ENCODE measurements at regions of chr17 and their contacts with region 1.

Region 1: DNA sequence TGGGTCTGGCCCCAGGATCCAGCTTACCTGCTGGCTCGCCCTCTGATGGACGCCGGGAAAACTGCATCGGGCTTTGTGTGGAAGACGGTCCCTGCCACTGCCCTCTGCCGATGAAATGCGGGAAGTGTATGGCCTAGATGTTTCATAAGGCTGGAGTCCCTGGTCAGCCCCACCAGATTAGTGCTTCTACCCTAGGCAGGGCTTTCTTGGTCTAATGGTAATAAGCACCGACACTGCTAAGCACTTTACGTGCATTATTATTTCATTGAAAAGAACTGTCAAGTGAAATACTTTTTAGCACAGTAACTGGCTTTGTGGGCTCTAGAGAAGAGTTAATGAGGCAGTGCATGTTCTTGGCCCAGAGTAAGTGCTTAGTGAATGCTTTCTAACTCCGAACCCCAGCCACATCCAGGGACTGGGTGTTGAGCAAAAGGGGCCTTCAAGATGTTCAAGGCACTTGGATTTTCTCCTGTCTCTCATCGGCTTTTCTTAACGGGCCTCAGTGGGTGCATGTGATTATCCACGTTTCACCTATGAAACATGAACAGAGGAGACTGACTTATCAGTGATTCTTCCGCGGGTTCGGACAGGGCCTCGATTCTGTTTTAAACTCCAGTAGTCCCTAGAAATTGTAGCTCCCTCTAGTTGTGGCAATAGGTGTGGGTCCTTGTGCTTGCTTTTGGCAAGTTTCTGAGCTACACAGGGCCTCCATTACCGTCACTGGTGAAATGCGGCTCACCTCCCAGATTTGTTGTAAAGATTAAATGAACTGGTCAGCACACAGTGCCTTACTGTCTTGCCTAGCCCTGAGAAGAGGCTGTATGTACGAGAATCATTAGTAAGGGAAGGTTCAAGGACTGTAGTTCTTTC is 6.6 kb downstream of the TRAF4 start:
- DNase-seq: peak; percentile 93
- ATAC-seq: peak; percentile 97
- H3K4me3 ChIP-seq: no peak overlapping the region
- H3K4me3 Mint-ChIP-seq: no peak overlapping the region
- H3K27ac ChIP-seq: peak overlapping the region in 1 of 2 donors; percentile 41
- H3K27ac Mint-ChIP-seq: peak overlapping the region; percentile 67
- H3K4me1 ChIP-seq: peaks cover 32 to 34% of the 10 kb centered on the region in 2 donors
- H3K4me1 Mint-ChIP-seq: peaks cover 42% of the 10 kb centered on the region
- H3K27me3 ChIP-seq: no peaks in the 10 kb centered on the region
- H3K27me3 Mint-ChIP-seq: no peaks in the 10 kb centered on the region
- CTCF ChIP-seq: peak; percentile 100

Region 2: DNA sequence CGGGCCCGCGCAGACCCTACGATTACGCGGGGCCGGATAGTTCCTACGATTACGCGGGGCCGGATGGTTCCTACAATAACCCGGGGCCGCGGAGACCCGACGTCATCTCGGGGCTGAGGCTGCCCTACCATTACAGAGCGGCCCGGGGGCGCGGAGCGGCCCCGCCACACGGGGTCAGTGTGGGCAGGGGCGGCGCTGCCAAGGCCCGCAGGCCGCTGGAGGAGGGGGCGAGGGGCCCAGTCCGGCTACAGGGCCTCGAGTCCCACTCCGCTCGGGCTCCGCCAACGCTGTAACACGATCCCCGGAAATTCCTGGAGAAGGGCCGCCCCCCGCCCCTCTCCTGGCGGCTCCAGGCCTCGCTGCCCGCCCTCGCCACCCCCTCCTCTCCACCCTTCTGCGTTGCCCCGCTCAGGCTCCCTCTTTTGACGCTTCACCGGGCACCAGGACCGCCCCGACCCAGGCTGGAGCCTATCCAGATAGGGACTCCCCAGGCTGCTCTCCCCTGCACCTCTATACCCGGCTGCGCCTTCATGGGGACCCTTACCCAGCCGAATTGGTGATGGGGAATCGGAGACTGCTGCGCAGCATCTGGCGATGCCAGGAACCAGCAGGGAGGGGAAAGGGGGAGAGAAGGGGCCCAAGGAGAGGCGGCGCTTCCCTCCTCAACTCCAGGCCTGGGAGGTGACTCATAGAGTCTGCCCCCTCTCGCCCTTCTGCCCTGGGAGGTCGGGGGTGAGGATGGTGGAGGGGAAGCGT is 32.7 kb before region 1 on chr17 and contains the start of gene RAB34:
- CTCF ChIA-PET with region 1: interaction called, 1,020 read pairs
- POLR2A ChIA-PET with region 1: interaction called, 511 read pairs
- intact Hi-C with region 1: loop called (anchors 5 kb)
- DNase-seq: peak; percentile 70
- ATAC-seq: peak; percentile 18
- H3K4me3 ChIP-seq: peak within 1 kb of the TSS in 4 of 5 experiments; percentile 46 to 61 (median 52)
- H3K4me3 Mint-ChIP-seq: peak within 1 kb of the TSS; percentile 86
- H3K27ac ChIP-seq: peak within 1 kb of the TSS; percentile 56 to 71
- H3K27ac Mint-ChIP-seq: peak within 1 kb of the TSS; percentile 89
- H3K4me1 ChIP-seq: peaks cover 44 to 57% of the 10 kb centered on the region in 2 donors
- H3K4me1 Mint-ChIP-seq: peaks cover 45% of the 10 kb centered on the region
- H3K27me3 ChIP-seq: peaks cover 0 to 8% (median 2%) of the 10 kb centered on the region in 4 experiments
- H3K27me3 Mint-ChIP-seq: no peaks in the 10 kb centered on the region
- CTCF ChIP-seq: no peak
- total RNA-seq, gene RAB34: 18.0 and 20.5 TPM in 2 replicates

Region 3: DNA sequence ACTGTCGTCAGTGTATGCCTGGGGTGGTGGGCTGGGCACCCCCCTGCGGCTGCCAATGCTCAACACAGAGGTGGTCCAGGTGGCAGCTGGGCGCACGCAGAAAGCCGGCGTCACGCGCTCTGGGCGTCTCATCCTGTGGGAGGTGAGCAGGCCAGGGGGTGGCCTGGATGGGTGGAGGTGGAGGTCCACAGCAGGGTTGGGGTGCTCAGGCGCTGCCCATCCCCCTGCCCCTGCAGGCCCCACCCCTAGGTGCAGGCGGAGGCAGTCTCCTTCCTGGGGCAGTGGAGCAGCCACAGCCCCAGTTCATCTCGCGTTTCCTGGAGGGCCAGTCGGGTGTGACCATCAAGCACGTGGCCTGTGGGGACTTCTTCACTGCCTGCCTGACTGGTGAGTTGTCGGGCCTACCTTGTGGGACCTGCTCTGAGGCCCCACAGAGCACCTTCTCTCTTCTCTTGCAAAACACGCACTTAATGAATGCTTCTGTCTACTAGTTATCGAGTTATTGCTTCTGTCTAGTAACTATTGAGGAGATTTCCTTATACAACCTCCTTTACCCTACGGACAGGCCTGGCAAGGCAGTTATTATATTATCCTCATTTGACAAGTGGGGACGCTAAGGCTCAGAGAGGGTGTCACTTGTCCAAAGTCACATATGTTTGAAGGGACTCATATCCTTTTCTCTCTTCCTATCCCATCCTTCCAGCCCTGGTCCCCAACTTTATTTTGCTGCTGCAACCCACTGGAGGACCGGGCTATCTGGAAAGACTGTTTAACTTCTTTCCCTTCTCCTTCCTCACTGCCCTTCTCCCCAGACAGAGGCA is 12.3 kb before region 1 on chr17:
- CTCF ChIA-PET with region 1: interaction called, 1,020 read pairs
- POLR2A ChIA-PET with region 1: interaction called, 511 read pairs
- intact Hi-C with region 1: no loop called
- DNase-seq: peak; percentile 94
- ATAC-seq: peak; percentile 73
- H3K4me3 ChIP-seq: peak overlapping the region in 4 of 5 experiments; percentile 15 to 39 (median 28)
- H3K4me3 Mint-ChIP-seq: peak overlapping the region; percentile 94
- H3K27ac ChIP-seq: peak overlapping the region; percentile 95 to 100
- H3K27ac Mint-ChIP-seq: peak overlapping the region; percentile 100
- H3K4me1 ChIP-seq: peaks cover 83 to 85% of the 10 kb centered on the region in 2 donors
- H3K4me1 Mint-ChIP-seq: peaks cover 80% of the 10 kb centered on the region
- H3K27me3 ChIP-seq: no peaks in the 10 kb centered on the region
- H3K27me3 Mint-ChIP-seq: no peaks in the 10 kb centered on the region
- CTCF ChIP-seq: no peak

Region 4: GRCh38 chr17:28896884-28897768 is 146.7 kb after region 1 on chr17 and contains the start of gene FLOT2:
- CTCF ChIA-PET with region 1: interaction called, 16 read pairs
- POLR2A ChIA-PET with region 1: interaction called, 14 read pairs
- intact Hi-C with region 1: no loop called
- DNase-seq: peak; percentile 76
- ATAC-seq: peak; percentile 60
- H3K4me3 ChIP-seq: peak within 1 kb of the TSS; percentile 71 to 95 (median 82)
- H3K4me3 Mint-ChIP-seq: peak within 1 kb of the TSS; percentile 97
- H3K27ac ChIP-seq: peak within 1 kb of the TSS; percentile 82 to 97
- H3K27ac Mint-ChIP-seq: peak within 1 kb of the TSS; percentile 99
- H3K4me1 ChIP-seq: peaks cover 62 to 73% of the 10 kb centered on the region in 2 donors
- H3K4me1 Mint-ChIP-seq: peaks cover 68% of the 10 kb centered on the region
- H3K27me3 ChIP-seq: no peaks in the 10 kb centered on the region
- H3K27me3 Mint-ChIP-seq: no peaks in the 10 kb centered on the region
- CTCF ChIP-seq: peak; percentile 57
- total RNA-seq, gene FLOT2: 251 and 270 TPM in 2 replicates

Measured in B cell (primary cell).